ENCODE measurements at regions of chr1 and their contacts with region 1.

Region 1: DNA sequence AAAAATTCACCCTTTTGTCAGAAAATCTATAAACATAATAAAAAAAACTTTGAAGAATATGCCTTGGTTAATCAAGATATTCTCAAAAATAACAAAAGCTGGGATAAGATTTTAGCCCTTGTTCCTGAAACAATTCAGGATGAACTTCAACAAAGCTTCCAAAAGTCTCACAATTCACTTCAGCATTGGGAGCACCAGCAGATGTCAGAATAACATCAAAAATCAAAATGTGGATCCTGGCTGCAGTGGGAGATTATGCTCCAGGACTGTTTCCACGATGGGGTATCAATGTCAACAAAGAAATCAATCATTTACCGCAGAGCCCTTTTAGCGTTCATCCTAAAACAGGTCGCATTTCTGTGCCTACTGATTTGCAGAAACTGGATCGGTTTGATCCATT is 35.2 kb downstream of the ZNF670 start:
- DNase-seq: no peak
- ATAC-seq: no peak
- H3K4me3 ChIP-seq: no peak overlapping the region
- H3K4me3 Mint-ChIP-seq: no peak overlapping the region
- H3K27ac ChIP-seq: no peak overlapping the region
- H3K27ac Mint-ChIP-seq: no peak overlapping the region
- H3K4me1 ChIP-seq: no peaks in the 10 kb centered on the region
- H3K4me1 Mint-ChIP-seq: peaks cover 0 to 4% (median 0%) of the 10 kb centered on the region in 7 donors
- H3K27me3 ChIP-seq: no peaks in the 10 kb centered on the region
- H3K27me3 Mint-ChIP-seq: no peaks in the 10 kb centered on the region

Region 2: DNA sequence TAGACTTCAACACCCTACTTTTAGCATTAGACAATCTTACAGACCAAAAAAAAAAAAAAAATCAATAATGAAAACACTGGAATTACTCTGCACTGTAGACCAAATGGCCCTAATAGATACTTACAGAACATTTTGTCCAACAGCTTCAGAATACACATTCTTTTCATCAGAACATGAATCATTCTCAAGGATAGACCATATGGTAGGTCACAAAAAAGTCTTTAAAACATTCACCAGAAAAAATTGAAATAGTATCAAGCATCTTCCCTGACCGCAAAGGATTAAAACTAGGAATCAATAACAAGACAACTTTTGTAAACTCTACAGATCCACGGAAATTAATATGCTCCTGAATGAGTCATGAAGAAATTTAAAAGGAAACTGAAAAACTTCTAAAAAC is 12.7 kb after region 1 on chr1:
- CTCF ChIA-PET with region 1: no interaction called
- POLR2A ChIA-PET with region 1: interaction called, 3 read pairs
- intact Hi-C with region 1: loop called in 1 of 2 experiments (anchors 2 kb)
- DNase-seq: no peak
- ATAC-seq: no peak
- H3K4me3 ChIP-seq: no peak overlapping the region
- H3K4me3 Mint-ChIP-seq: no peak overlapping the region
- H3K27ac ChIP-seq: no peak overlapping the region
- H3K27ac Mint-ChIP-seq: no peak overlapping the region
- H3K4me1 ChIP-seq: no peaks in the 10 kb centered on the region
- H3K4me1 Mint-ChIP-seq: peaks cover 0 to 12% (median 5%) of the 10 kb centered on the region in 7 donors
- H3K27me3 ChIP-seq: no peaks in the 10 kb centered on the region
- H3K27me3 Mint-ChIP-seq: no peaks in the 10 kb centered on the region

Measured in naive thymus-derived CD4-positive, alpha-beta T cell (primary cell).